CD8-positive, alpha-beta T cell (primary cell): ENCODE measurements at regions of chr11 and their contacts with region 1.

Region 1: GRCh38 chr11:66222358-66223149 is 45.9 kb upstream of the RAB1B start:
- DNase-seq: peak; percentile 82 to 98 (median 92)
- ATAC-seq: peak; percentile 99
- H3K4me3 ChIP-seq: no peak overlapping the region
- H3K4me3 Mint-ChIP-seq: no peak overlapping the region
- H3K27ac ChIP-seq: peak overlapping the region; percentile 23 to 82
- H3K27ac Mint-ChIP-seq: peak overlapping the region; percentile 93
- H3K4me1 ChIP-seq: peaks cover 6% of the 10 kb centered on the region
- H3K4me1 Mint-ChIP-seq: peaks cover 16% of the 10 kb centered on the region
- H3K27me3 ChIP-seq: no peaks in the 10 kb centered on the region
- H3K27me3 Mint-ChIP-seq: no peaks in the 10 kb centered on the region
- CTCF ChIP-seq: peak; percentile 98

Region 2: DNA sequence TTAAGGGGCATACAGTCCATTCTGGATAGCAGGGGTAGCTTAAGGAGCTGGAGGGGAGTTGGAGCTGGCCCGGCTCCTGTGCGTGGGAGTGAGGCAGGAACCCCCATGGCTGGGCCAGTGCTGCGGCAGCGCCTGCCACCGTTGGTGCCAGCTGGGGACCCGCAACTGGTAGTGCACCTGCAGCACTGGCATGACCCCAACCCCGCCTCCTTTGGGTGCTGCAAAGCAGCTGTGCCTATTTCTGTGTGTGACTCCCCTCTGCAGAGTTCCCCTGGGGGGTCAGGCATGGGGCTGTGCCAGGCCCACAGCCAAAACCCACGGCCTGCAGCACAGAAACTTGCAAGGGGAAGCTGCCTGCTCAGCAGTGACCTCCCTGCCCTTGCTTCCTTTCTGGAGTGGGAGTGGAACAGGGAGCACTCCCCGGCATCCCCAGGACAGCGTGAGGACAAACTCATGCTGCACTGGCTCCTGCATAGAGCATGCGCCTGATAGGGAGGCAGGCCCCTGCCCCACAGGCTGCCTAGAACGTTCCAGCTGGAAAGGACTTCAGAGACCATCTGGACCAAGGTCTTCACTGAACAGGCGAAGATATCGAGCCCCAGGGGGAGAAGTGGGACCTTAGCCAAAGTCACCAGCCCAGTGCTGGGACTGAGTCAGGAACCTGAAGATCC is 19.7 kb after region 1 on chr11:
- CTCF ChIA-PET with region 1: interaction called, 19 read pairs
- POLR2A ChIA-PET with region 1: interaction called, 3 read pairs
- intact Hi-C with region 1: no loop called
- DNase-seq: no peak
- ATAC-seq: no peak
- H3K4me3 ChIP-seq: no peak overlapping the region
- H3K4me3 Mint-ChIP-seq: no peak overlapping the region
- H3K27ac ChIP-seq: no peak overlapping the region
- H3K27ac Mint-ChIP-seq: no peak overlapping the region
- H3K4me1 ChIP-seq: no peaks in the 10 kb centered on the region
- H3K4me1 Mint-ChIP-seq: no peaks in the 10 kb centered on the region
- H3K27me3 ChIP-seq: no peaks in the 10 kb centered on the region
- H3K27me3 Mint-ChIP-seq: no peaks in the 10 kb centered on the region
- CTCF ChIP-seq: no peak

Region 3: DNA sequence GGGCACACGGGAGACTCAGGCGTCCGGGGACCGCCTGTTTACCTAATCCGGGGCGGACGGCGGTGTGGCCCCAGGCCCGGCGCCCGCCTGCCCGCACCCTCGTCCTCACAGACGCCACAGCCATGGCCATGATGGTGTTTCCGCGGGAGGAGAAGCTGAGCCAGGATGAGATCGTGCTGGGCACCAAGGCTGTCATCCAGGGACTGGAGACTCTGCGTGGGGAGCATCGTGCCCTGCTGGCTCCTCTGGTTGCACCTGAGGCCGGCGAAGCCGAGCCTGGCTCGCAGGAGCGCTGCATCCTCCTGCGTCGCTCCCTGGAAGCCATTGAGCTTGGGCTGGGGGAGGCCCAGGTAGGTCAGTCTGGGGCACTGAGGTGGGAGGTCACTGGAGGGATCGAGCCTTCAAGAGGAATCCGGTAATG is 35.9 kb after region 1 on chr11:
- CTCF ChIA-PET with region 1: interaction called, 6 read pairs
- POLR2A ChIA-PET with region 1: interaction called, 3 read pairs
- intact Hi-C with region 1: loop called (anchors 1 kb)
- DNase-seq: no peak
- ATAC-seq: no peak
- H3K4me3 ChIP-seq: peak overlapping the region; percentile 92
- H3K4me3 Mint-ChIP-seq: peak overlapping the region; percentile 93
- H3K27ac ChIP-seq: peak overlapping the region; percentile 88 to 100
- H3K27ac Mint-ChIP-seq: peak overlapping the region; percentile 73
- H3K4me1 ChIP-seq: peaks cover 25% of the 10 kb centered on the region
- H3K4me1 Mint-ChIP-seq: peaks cover 27% of the 10 kb centered on the region
- H3K27me3 ChIP-seq: no peaks in the 10 kb centered on the region
- H3K27me3 Mint-ChIP-seq: no peaks in the 10 kb centered on the region
- CTCF ChIP-seq: no peak

Region 4: DNA sequence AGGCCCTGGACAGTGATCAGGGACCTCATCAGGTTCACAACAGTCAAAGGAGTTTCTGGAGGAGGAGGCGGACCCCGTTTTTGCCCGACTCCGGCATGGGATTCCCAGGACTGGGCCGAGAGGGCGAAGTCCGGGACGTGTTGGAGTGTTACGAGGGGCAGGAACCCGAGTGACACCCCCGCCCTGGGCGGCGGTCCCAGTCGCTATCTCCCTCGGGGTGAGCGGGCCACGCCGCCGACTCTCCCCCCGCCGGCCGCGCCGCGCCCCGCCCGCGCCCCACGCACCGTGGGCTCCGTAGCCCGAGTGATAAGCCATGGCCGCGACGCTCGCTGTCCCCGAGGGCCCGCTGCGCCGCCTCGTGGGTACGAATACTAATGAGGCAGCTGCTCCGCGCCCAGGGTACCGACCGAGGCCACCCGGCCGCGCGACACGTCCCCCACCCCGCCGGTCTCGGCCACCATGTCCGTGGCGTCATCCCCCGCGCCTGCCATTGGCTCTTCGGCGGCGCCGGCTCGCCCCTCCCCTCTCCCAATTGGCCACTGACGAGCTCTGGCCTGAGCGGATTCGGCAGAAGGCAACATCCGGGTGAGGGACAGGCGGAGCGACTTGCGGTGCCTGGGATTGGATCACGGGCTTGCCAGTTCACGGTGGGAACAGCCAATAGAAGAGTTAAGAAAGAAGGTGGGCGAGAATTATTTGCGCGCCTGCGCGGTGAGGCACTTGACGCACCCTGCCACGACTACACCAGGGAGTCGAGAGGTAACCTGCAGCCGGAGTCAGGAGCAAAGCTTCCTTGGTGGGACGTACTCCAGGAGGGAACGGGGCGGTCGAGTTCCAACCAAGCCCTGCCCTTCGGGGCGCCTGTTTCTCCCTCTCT is 66.4 kb after region 1 on chr11 and contains the start of gene YIF1A:
- CTCF ChIA-PET with region 1: interaction called, 20 read pairs
- POLR2A ChIA-PET with region 1: interaction called, 4 read pairs
- intact Hi-C with region 1: loop called in 1 of 2 experiments (anchors 1 kb)
- DNase-seq: peak; percentile 96 to 99 (median 98)
- ATAC-seq: peak; percentile 90
- H3K4me3 ChIP-seq: peak within 1 kb of the TSS; percentile 67 to 80
- H3K4me3 Mint-ChIP-seq: peak within 1 kb of the TSS; percentile 82
- H3K27ac ChIP-seq: peak within 1 kb of the TSS; percentile 75 to 81
- H3K27ac Mint-ChIP-seq: peak within 1 kb of the TSS; percentile 85
- H3K4me1 ChIP-seq: peaks cover 27% of the 10 kb centered on the region
- H3K4me1 Mint-ChIP-seq: peaks cover 42% of the 10 kb centered on the region
- H3K27me3 ChIP-seq: peaks cover 16 to 17% of the 10 kb centered on the region in 2 experiments
- H3K27me3 Mint-ChIP-seq: peaks cover 13% of the 10 kb centered on the region
- CTCF ChIP-seq: no peak
- total RNA-seq, gene YIF1A: 16.8 to 17.1 TPM

Region 5: DNA sequence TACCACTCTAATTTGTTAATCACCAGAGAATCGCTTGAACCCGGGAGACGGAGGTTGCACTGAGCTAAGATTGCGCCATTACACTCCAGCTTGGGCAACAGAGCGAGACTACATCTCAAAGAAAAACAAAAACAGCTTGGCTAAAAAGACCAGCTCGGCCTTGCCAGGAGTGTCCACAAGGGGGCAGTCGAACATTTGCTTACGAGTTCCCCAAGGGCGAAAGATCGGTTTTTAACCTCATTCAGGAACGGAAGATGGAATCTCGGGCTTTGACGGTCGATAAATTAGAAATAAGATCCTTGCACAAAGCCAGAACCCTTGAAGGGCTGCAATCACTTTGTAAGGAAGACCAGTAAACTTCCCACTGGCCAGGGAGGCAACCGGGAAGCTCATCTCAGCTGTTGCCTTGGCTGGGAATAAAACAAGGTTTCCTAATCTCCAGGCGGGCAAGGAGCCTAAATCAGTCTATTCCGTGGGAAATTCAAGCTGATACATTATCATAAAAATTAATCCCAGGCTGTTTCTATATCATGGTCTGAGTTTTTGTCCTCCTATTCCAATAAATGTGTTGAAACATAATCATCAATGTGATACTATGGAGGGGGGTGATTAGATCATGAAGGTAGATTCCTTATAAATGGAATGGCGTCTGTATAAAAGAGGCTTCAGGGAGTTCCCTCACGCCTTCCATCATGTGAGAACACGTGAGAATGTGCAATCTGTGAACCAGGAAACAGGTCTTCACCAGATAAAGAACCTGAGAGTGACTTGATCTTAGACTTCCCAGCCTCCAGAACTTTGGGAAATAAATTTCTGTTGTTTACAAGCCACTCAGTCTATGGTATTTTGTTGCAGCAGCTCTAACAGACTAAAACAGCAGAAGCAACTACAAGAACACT is 163.9 kb after region 1 on chr11:
- CTCF ChIA-PET with region 1: interaction called, 4 read pairs
- POLR2A ChIA-PET with region 1: no interaction called
- intact Hi-C with region 1: loop called in 1 of 2 experiments (anchors 2 kb)
- DNase-seq: peak; percentile 67 to 90 (median 83)
- ATAC-seq: peak; percentile 75
- H3K4me3 ChIP-seq: no peak overlapping the region
- H3K4me3 Mint-ChIP-seq: peak overlapping the region; percentile 18
- H3K27ac ChIP-seq: no peak overlapping the region
- H3K27ac Mint-ChIP-seq: no peak overlapping the region
- H3K4me1 ChIP-seq: peaks cover 5% of the 10 kb centered on the region
- H3K4me1 Mint-ChIP-seq: peaks cover 8% of the 10 kb centered on the region
- H3K27me3 ChIP-seq: no peaks in the 10 kb centered on the region
- H3K27me3 Mint-ChIP-seq: no peaks in the 10 kb centered on the region
- CTCF ChIP-seq: peak; percentile 77

Region 6: GRCh38 chr11:67505605-67506396 is 1283.2 kb after region 1 on chr11:
- CTCF ChIA-PET with region 1: no interaction called
- POLR2A ChIA-PET with region 1: no interaction called
- intact Hi-C with region 1: no loop called
- DNase-seq: peak; percentile 79 to 96 (median 90)
- ATAC-seq: peak; percentile 58
- H3K4me3 ChIP-seq: peak overlapping the region; percentile 45 to 88
- H3K4me3 Mint-ChIP-seq: peak overlapping the region; percentile 90
- H3K27ac ChIP-seq: peak overlapping the region; percentile 70 to 97
- H3K27ac Mint-ChIP-seq: peak overlapping the region; percentile 97
- H3K4me1 ChIP-seq: peaks cover 45% of the 10 kb centered on the region
- H3K4me1 Mint-ChIP-seq: peaks cover 46% of the 10 kb centered on the region
- H3K27me3 ChIP-seq: no peaks in the 10 kb centered on the region
- H3K27me3 Mint-ChIP-seq: peaks cover under 1% of the 10 kb centered on the region
- CTCF ChIP-seq: peak; percentile 79